ENCODE measurements at regions of chr4 and their contacts with region 1.

Region 1: DNA sequence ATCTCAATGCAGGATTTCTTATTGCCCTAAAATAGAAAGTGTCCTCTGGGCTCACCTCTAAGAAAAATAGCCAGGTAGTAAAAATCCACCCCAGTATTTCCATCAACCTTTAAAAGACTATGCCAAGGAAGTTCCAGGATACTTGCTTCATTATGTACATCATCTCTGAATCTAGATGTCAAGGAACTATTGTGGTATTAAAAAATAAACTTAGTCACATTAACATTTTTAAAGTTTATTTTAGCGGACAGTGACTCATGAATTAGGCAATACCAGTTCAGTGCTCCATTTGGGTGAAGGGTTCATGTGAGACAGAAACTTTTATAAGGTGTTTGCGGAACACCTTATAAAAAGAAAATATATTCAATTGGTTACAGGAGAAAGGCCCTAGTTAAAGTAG is 209.2 kb downstream of the ADAM29 start:
- DNase-seq: peak in 1 of 2 experiments; percentile 39
- H3K4me3 ChIP-seq: no peak overlapping the region
- H3K27ac ChIP-seq: peak overlapping the region; percentile 25; the same call in 1 of the 2 replicates
- H3K4me1 ChIP-seq: peaks cover 16% of the 10 kb centered on the region
- H3K27me3 ChIP-seq: no peaks in the 10 kb centered on the region
- CTCF ChIP-seq: no peak

Region 2: DNA sequence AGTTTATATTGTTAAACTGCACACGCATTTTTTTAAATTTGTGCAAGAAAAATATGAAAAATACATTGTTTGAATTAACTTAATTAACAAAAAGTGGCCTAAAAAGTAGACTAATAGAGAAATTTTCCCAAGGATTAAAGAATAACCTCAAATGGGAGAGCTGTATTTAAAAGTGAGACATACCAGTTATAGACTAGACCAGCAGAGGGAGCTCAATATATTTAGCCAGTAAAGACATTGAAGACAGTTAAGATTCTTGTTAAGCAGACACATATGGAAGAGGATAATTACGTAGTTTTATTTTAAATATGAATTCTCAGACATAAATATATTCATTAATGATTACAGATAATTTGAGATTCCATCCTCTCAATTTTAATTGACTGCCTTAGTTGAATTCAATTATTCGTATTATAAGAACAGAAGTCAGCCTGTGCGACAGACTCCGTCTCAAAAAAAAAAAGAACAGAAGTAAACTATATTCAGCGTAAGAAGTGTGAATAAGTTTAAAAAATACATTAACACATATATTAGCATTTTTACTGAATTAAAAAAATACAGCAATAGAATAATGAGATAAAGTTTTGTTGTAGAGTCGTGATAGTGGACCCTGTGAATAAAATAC is 363.1 kb before region 1 on chr4:
- CTCF ChIA-PET with region 1: no interaction called
- POLR2A ChIA-PET with region 1: no interaction called
- intact Hi-C with region 1: loop called (anchors 10 kb)
- DNase-seq: no peak
- H3K4me3 ChIP-seq: no peak overlapping the region
- H3K27ac ChIP-seq: no peak overlapping the region
- H3K4me1 ChIP-seq: no peaks in the 10 kb centered on the region
- H3K27me3 ChIP-seq: no peaks in the 10 kb centered on the region
- CTCF ChIP-seq: peak; percentile 70

Region 3: DNA sequence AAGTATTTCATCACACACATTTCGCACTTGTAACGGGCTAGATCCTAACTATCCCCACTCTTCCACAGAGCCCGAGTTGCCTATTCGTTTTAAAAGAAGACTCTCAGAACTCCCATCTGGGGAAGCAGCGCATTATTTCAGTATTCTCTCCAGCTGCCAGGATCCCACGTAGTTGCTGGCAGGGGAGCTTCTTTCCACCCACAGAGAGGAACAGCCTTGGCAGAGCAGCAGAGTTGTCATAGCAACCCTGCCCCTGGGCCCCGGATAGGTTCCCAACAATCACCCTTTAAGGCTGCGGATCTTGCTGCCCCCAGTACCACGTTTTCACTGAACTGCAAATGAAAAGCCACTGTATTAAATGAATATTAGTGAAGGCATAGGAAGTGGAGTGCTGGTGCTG is 578.1 kb after region 1 on chr4:
- CTCF ChIA-PET with region 1: no interaction called
- POLR2A ChIA-PET with region 1: no interaction called
- intact Hi-C with region 1: no loop called
- DNase-seq: no peak
- H3K4me3 ChIP-seq: no peak overlapping the region
- H3K27ac ChIP-seq: no peak overlapping the region
- H3K4me1 ChIP-seq: no peaks in the 10 kb centered on the region
- H3K27me3 ChIP-seq: no peaks in the 10 kb centered on the region
- CTCF ChIP-seq: no peak

Region 4: DNA sequence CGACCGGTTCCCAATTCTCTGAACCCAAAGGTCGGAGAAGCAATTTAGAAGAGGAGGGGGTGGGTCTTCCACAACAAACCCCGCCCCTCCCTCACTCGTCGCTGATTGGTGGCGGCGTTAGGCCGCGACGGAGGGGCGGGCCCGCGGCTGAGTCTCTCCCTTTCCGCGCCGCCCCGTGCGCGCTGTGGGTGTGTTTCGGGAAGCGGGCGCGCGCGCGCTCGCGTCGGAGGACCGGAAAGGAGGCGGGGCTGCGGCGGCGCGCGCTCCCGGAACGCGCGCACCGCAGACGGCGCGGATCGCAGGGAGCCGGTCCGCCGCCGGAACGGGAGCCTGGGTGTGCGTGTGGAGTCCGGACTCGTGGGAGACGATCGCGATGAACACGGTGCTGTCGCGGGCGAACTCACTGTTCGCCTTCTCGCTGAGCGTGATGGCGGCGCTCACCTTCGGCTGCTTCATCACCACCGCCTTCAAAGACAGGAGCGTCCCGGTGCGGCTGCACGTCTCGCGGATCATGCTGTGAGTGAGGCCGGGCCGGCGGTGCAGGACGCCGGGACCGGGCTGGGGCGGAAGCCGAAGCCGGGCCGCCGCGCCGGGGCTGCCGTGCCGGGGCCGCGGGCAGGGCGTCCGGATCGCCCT is 1192.5 kb after region 1 on chr4 and contains the start of gene SPCS3:
- CTCF ChIA-PET with region 1: no interaction called
- POLR2A ChIA-PET with region 1: no interaction called
- intact Hi-C with region 1: no loop called
- DNase-seq: peak; percentile 76 to 93
- H3K4me3 ChIP-seq: peak within 1 kb of the TSS; percentile 95
- H3K27ac ChIP-seq: peak within 1 kb of the TSS; percentile 87
- H3K4me1 ChIP-seq: peaks cover 18% of the 10 kb centered on the region
- H3K27me3 ChIP-seq: no peaks in the 10 kb centered on the region
- CTCF ChIP-seq: no peak
- total RNA-seq, gene SPCS3: 107 TPM in 2 replicates

Measured in PC-9 (cell line).